ENCODE measurements at regions of chr5 and their contacts with region 1.

Region 1: DNA sequence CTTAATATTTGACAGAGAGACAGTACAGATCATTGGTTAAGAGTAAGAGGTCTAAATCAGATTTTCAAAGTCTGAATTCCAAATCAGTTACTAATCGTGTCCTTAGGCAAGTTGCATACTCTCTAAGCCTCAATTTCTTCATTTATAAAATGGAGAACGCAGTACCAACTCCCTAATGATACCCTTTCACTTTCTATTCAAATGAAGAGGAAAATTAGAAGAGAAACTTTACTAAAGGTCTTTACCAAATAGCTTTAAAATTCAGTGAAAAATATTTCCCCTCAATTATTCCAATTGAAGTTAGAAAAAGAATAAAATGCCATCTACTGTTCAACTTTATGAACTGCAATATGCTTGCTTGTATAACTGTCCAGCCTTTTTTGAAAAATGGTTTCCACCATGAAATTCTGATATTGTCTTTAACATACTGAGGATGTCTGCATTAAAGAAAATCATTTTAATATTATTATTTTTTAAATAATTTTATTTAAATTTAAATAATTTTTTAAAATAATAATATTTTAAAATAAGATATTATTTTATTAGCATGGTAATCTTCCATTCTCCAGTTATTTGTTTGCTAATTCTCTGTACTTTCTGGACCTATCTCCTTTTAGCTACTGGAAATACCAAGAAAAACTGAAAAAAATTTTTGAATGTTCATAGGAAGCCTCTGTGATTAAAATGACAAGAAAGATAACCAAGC is 36.0 kb downstream of the POC5 start:
- DNase-seq: no peak
- H3K4me3 ChIP-seq: no peak overlapping the region
- H3K27ac ChIP-seq: no peak overlapping the region
- H3K27me3 ChIP-seq: no peaks in the 10 kb centered on the region
- CTCF ChIP-seq: peak; percentile 67

Region 2: DNA sequence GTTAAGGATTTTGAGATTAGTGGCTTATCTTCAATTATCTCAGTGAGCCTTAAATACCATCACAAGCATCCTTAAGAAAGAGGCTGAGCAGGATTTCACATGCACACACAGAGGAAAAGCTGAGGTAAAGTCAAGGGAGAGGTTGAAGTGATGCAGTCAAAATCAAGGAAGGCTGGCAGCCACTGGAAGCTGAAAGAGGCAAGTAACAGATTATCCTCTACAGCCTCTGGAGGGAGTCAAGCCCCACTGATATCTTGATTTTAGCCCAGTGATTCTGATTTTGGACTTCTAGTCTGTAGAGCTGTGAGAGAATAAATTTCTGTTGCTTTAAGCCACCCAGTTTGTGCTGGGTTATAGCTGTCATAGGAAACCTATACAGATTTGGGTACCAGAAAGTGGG is 524.7 kb before region 1 on chr5:
- CTCF ChIA-PET with region 1: no interaction called
- POLR2A ChIA-PET with region 1: no interaction called
- DNase-seq: no peak
- H3K4me3 ChIP-seq: no peak overlapping the region
- H3K27ac ChIP-seq: no peak overlapping the region
- H3K27me3 ChIP-seq: no peaks in the 10 kb centered on the region
- CTCF ChIP-seq: 0 out of 2 replicates have a peak, but pooled peaks have one; percentile 9

Region 3: GRCh38 chr5:75656311-75657003 is 24.8 kb before region 1 on chr5:
- CTCF ChIA-PET with region 1: interaction called, 21 read pairs
- POLR2A ChIA-PET with region 1: no interaction called
- DNase-seq: no peak
- H3K4me3 ChIP-seq: peak overlapping the region; percentile 63
- H3K27ac ChIP-seq: no peak overlapping the region
- H3K27me3 ChIP-seq: no peaks in the 10 kb centered on the region
- CTCF ChIP-seq: no peak

Region 4: DNA sequence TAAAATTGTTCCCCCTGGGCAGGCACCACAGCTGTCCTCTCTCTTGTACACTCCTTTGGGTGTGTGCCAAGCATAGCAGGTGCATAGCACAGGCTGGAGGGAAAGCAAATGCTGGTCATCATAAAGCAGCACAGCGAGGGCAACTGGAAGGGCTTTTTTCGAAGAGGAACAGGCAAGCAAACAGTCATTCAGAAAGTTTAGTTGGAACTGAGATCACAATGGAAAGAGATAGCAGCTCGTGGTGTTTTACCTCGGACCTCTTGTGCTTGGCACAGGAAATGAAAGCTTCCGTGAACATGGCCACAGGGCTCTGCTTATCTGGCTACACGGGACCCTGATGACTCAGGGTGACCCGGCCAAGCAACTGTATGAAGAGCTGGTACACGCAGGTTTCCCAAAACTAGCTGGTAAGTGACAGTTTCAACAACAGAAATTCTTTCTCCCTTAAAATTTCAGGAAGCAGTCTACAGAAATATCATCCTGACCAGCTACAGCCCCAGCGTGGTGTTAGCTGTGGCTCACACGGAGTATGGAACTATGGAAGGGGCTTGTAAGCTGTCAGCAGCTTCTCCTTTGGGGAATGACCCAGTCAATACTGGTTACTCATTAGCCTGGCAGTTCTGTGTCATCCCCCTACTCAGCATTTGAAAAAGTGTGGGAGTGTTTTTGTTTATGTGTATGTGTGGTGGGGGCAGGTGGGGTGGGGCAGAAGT is 12.1 kb before region 1 on chr5:
- CTCF ChIA-PET with region 1: interaction called, 16 read pairs
- POLR2A ChIA-PET with region 1: no interaction called
- DNase-seq: no peak
- H3K4me3 ChIP-seq: no peak overlapping the region
- H3K27ac ChIP-seq: no peak overlapping the region
- H3K27me3 ChIP-seq: no peaks in the 10 kb centered on the region
- CTCF ChIP-seq: no peak